ENCODE measurements at regions of chrX and their contacts with region 1.

Region 1: GRCh38 chrX:81259714-81260395 is 58.0 kb downstream of the SH3BGRL start:
- DNase-seq: no peak
- H3K4me3 ChIP-seq: no peak overlapping the region
- H3K27ac ChIP-seq: peak overlapping the region; percentile 62 to 79 (median 74)
- H3K4me1 ChIP-seq: peaks cover 0 to 69% (median 43%) of the 10 kb centered on the region in 4 donors
- H3K27me3 ChIP-seq: no peaks in the 10 kb centered on the region
- CTCF ChIP-seq: no peak
- EP300 ChIP-seq: no peak
- POLR2A ChIP-seq: no peak

Region 2: DNA sequence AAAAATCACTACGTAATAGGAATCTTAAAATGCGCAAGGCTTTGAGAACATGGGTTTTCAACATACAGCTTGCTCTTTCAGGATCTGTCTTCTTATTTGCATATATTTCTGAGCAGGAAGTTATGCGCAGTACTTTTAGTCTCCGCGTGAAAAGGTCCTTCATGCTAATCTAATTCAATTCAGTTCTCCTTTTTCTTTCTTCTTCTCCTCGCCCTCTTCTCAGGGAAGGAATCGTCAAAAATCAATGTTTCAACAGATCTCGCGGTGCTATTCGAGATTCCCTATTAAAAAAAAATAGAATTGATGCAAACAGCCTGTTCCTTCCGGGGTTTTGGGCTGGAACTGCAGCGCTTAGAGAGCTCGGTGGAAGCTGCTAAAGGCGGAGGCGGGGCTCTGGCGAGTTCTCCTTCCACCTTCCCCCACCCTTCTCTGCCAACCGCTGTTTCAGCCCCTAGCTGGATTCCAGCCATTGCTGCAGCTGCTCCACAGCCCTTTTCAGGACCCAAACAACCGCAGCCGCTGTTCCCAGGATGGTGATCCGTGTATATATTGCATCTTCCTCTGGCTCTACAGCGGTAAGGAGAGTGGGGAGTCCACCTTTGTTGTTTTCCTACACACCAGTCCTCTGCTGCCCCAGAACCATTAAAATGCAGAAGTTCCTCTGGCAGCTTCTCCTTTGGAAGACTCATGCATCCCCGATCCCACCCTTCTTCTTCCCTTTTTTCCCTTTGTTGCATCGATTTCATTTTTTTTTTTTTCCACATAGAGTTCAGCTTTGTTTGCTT is 58.0 kb before region 1 on chrX and contains the starts of genes HMGN5 and SH3BGRL:
- intact Hi-C with region 1: loop called (anchors 5 kb)
- DNase-seq: peak; percentile 92
- H3K4me3 ChIP-seq: peak within 1 kb of the TSS; percentile 58 to 73 (median 64)
- H3K27ac ChIP-seq: peak within 1 kb of the TSS; percentile 82 to 85 (median 82)
- H3K4me1 ChIP-seq: peaks cover 0 to 16% (median 11%) of the 10 kb centered on the region in 4 donors
- H3K27me3 ChIP-seq: no peaks in the 10 kb centered on the region
- CTCF ChIP-seq: no peak
- EP300 ChIP-seq: no peak
- POLR2A ChIP-seq: no peak
- total RNA-seq, gene HMGN5: 2.1 to 16.2 (median 3.2) TPM
- total RNA-seq, gene SH3BGRL: 251 to 338 (median 290) TPM